OCI-LY7 (cell line): ENCODE measurements at regions of chr5 and their contacts with region 1.

Region 1: DNA sequence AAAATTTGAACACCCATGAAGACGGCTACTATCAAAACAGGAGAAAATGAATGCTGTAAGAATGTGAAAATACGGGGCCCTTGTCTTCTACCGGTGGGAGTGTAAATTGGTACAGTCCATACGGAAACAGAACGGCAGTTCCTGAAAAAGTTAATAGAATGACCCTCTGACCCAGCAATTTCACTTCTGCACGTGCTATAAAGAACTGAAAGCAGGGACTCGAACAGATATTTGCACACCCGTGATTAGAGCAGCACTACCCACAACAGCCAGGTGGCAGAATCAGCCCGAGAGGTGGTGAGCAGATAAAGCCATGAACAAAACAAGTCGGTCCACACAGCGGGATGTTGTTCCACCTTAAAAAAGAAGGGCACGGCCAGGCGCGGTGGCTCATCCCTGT is 22.6 kb upstream of the SLC12A7 start:
- DNase-seq: peak; percentile 96
- H3K4me3 ChIP-seq: peak overlapping the region; percentile 27
- H3K27ac ChIP-seq: peak overlapping the region; percentile 70
- H3K4me1 ChIP-seq: peaks cover 54% of the 10 kb centered on the region
- CTCF ChIP-seq: peak; percentile 78

Region 2: DNA sequence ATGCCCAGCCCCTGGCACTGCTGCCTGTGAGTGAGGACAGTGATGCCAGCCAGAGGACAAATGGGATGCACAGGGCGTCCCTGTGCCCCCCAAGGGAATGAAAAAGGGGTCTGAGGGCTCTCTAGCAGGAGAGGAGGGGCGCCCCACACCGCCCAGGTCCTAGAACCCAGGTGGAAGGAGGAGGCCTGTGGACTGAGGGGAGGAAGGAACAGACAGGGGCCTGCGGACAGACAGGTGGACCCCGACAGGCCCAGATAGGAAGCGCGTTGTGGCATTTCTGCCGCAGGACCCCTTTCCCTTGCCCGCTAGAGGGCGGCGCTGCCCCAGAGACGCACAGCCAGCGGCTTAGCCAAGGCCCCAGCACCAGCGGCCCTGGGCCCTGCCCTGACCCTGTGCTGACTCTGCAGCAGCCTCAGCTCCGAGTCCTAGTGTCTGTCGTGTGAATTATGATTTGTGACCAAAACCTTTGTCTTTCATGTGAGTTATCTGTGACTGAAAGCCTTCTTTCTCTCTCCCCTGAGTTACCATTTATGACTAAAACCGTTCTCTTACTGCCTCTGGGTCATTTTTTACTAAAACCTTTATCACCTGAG is 211.1 kb before region 1 on chr5:
- CTCF ChIA-PET with region 1: no interaction called
- POLR2A ChIA-PET with region 1: no interaction called
- intact Hi-C with region 1: loop called (anchors 10 kb)
- DNase-seq: peak; percentile 66
- H3K4me3 ChIP-seq: no peak overlapping the region
- H3K27ac ChIP-seq: no peak overlapping the region
- H3K4me1 ChIP-seq: no peaks in the 10 kb centered on the region
- CTCF ChIP-seq: peak; percentile 82

Region 3: GRCh38 chr5:1068204-1068894 is 66.1 kb before region 1 on chr5:
- CTCF ChIA-PET with region 1: interaction called, 12 read pairs
- POLR2A ChIA-PET with region 1: no interaction called
- intact Hi-C with region 1: no loop called
- DNase-seq: no peak
- H3K4me3 ChIP-seq: no peak overlapping the region
- H3K27ac ChIP-seq: no peak overlapping the region
- H3K4me1 ChIP-seq: no peaks in the 10 kb centered on the region
- CTCF ChIP-seq: no peak